ENCODE measurements at regions of chr13 and their contacts with region 1.

Region 1: DNA sequence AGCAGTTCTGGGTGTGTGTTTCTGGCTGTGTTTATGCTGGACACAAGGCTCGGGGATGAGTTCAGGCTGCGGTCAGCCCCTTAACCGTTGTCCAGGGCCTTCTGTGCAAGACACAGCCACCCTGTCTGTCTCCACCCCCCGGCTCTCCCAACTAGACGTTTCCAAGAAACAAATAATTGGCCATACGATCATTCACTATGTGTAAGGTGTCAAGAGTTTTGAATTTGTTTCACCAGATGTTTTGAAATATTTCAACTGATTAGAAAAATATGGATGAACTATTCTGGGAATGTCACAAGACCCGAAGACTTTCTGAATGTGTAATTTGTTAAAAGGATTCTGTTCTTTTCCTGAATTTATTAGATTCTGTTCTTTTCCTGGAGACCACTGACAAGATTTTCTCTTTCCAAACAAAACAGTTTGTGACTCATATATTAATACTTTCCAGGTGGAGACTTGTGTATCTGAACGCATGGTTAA is 318.2 kb downstream of the MYO16 start:
- DNase-seq: peak in 1 of 2 donors; percentile 44
- H3K4me3 ChIP-seq: no peak overlapping the region
- H3K27ac ChIP-seq: peak overlapping the region; percentile 79 to 86
- H3K4me1 ChIP-seq: no peaks in the 10 kb centered on the region
- H3K27me3 ChIP-seq: no peaks in the 10 kb centered on the region
- CTCF ChIP-seq: no peak
- POLR2A ChIP-seq: no peak

Region 2: GRCh38 chr13:109400209-109400608 is 452.6 kb after region 1 on chr13:
- intact Hi-C with region 1: loop called (anchors 10 kb)
- DNase-seq: no peak
- H3K4me3 ChIP-seq: no peak overlapping the region
- H3K27ac ChIP-seq: no peak overlapping the region
- H3K4me1 ChIP-seq: no peaks in the 10 kb centered on the region
- H3K27me3 ChIP-seq: no peaks in the 10 kb centered on the region
- CTCF ChIP-seq: no peak
- POLR2A ChIP-seq: no peak